Gastrocnemius medialis (tissue), 4 donors: ENCODE measurements at regions of chr12 and their contacts with region 1.

Region 1: GRCh38 chr12:116599285-116600136 is 40.3 kb downstream of the MAP1LC3B2 start:
- DNase-seq: peak; percentile 67 to 74
- ATAC-seq: peak; percentile 79 to 83
- H3K4me3 ChIP-seq: peak overlapping the region; percentile 46 to 66 (median 49)
- H3K27ac ChIP-seq: peak overlapping the region; percentile 68 to 82 (median 78)
- H3K4me1 ChIP-seq: peaks cover 15 to 20% of the 10 kb centered on the region in 2 donors
- H3K27me3 ChIP-seq: peaks cover 5 to 6% (median 6%) of the 10 kb centered on the region in 3 donors
- CTCF ChIP-seq: peak; percentile 27 to 84 (median 58)
- POLR2A ChIP-seq: peak; percentile 11 to 62

Region 2: DNA sequence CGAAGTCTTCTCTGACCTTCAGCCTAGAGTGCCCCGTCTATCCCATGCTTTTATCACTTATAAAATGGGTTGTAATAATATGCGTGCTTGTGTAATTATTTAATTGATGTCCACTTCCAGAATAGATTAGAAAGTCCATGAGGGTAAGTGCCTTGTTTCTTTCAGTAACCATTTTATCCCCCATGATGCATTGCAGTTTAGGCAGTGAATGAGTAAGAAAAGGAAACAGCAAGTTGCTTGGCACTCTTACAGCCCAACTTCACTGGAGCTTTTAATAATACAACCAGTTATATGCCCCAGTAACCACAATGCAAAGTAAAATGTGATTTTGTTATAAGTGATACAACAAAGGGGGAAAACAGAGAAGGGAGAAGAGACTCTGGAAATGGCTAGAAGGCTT is 609.3 kb before region 1 on chr12:
- in situ Hi-C with region 1: loop called in 3 of 4 experiments (anchors 5 to 25 kb)
- intact Hi-C with region 1: no loop called
- DNase-seq: no peak
- ATAC-seq: no peak
- H3K4me3 ChIP-seq: no peak overlapping the region
- H3K27ac ChIP-seq: no peak overlapping the region
- H3K4me1 ChIP-seq: peaks cover 3 to 14% of the 10 kb centered on the region in 2 donors
- H3K27me3 ChIP-seq: no peaks in the 10 kb centered on the region
- CTCF ChIP-seq: no peak
- POLR2A ChIP-seq: no peak

Region 3: GRCh38 chr12:116142936-116143898 is 456.3 kb before region 1 on chr12:
- in situ Hi-C with region 1: no loop called
- intact Hi-C with region 1: loop called (anchors 10 kb)
- DNase-seq: no peak
- ATAC-seq: no peak
- H3K4me3 ChIP-seq: no peak overlapping the region
- H3K27ac ChIP-seq: peak overlapping the region; percentile 32 to 67 (median 64)
- H3K4me1 ChIP-seq: peaks cover 63 to 70% of the 10 kb centered on the region in 2 donors
- H3K27me3 ChIP-seq: no peaks in the 10 kb centered on the region
- CTCF ChIP-seq: no peak
- POLR2A ChIP-seq: no peak

Region 4: GRCh38 chr12:116266168-116266601 is 333.3 kb before region 1 on chr12:
- in situ Hi-C with region 1: loop called in 3 of 4 experiments (anchors 10 to 25 kb)
- intact Hi-C with region 1: no loop called
- DNase-seq: no peak
- ATAC-seq: peak; percentile 76 to 94
- H3K4me3 ChIP-seq: no peak overlapping the region
- H3K27ac ChIP-seq: peak overlapping the region in 2 of 4 donors; percentile 25 to 32
- H3K4me1 ChIP-seq: peaks cover 73 to 75% of the 10 kb centered on the region in 2 donors
- H3K27me3 ChIP-seq: no peaks in the 10 kb centered on the region
- CTCF ChIP-seq: no peak
- POLR2A ChIP-seq: no peak

Region 5: DNA sequence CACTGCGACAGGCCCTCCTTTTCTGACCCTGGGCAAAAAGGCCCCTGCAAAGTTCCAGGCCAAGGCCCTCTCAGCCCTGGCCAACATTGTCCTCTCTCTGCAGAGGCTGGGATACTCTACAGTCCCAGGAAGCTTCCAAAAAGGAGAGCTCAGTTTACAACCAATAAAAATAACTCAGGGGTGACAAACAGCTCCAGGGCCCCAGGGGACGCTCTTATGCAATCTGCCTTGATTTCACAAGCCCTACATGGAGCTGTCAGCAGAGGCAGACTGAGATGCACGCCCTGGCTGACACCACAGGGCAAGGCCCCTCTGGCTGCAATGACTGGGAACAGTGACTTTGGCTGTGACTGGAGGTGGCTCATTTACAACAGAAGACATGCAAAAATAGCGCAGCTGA is 193.0 kb before region 1 on chr12:
- in situ Hi-C with region 1: no loop called
- intact Hi-C with region 1: loop called (anchors 5 kb)
- DNase-seq: peak; percentile 98 to 99
- ATAC-seq: peak; percentile 94 to 99
- H3K4me3 ChIP-seq: no peak overlapping the region
- H3K27ac ChIP-seq: peak overlapping the region; percentile 62 to 73 (median 68)
- H3K4me1 ChIP-seq: peaks cover 17 to 24% of the 10 kb centered on the region in 2 donors
- H3K27me3 ChIP-seq: no peaks in the 10 kb centered on the region
- CTCF ChIP-seq: peak in 2 of 5 experiments; percentile 37 to 39
- POLR2A ChIP-seq: peak in 1 of 2 donors; percentile 30

Region 6: DNA sequence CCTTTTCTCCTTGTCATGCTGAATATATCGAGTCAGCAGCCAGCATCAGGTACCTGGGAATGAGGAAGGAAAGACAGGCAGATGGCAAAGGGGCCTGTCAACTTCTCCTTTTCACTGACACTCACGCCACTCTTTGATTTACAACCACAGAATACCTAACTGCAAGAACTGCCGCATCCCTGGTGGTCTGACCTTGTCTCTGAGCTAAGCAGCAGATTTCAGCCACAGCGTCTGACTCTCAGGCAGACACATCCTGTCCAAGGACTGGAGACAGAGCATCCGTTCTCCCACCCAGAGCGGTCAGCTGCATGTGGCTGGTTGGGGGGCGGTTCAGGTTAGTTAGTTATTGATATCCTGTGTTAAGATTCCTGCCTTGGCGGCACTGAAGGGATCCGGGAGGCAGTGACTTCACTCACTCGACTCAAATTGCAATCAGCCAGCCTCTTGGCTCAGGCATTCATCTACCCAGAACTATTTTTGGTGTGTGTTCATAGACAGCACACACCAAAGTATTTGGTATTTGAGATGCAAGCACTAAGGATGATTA is 51.5 kb before region 1 on chr12:
- in situ Hi-C with region 1: loop called in 1 of 4 experiments (anchors 10 kb)
- intact Hi-C with region 1: no loop called
- DNase-seq: no peak
- ATAC-seq: peak; percentile 26 to 32
- H3K4me3 ChIP-seq: no peak overlapping the region
- H3K27ac ChIP-seq: no peak overlapping the region
- H3K4me1 ChIP-seq: peaks cover 10 to 11% of the 10 kb centered on the region in 2 donors
- H3K27me3 ChIP-seq: no peaks in the 10 kb centered on the region
- CTCF ChIP-seq: no peak
- POLR2A ChIP-seq: no peak

Region 7: DNA sequence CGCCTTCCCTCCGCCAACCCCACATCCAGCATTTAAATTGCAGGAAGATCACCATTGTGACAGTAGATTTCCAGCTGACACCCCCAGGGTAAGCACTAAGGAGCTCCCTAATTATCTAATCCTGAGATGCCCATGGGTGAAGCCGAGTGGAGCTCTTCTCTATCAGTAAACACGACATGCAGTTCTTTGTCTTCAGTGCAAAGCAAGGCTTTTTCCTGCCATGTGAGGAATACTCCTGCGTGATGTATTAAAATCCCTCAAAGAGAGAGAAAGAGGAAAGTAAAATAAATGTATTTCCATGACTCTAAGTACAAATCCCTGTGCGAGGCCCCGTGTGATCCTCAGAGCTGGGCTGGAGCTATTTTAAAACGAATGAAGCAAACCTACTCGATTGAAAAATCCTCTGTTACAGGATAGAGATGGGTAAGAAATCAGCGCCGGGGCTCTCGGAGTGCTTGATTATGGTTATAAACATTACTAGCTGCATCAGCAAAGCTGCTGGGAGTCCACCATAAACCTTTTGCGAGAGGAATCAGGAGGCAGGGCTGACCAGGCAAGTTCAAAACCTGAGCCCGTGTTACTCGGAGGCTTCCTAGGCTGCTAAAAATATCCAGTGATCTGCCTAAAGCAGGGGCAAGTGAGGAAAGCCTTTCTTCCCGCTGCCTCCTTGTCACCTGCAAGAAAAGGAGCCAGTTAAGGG is 21.1 kb after region 1 on chr12:
- in situ Hi-C with region 1: no loop called
- intact Hi-C with region 1: no loop called
- DNase-seq: no peak
- ATAC-seq: no peak
- H3K4me3 ChIP-seq: no peak overlapping the region
- H3K27ac ChIP-seq: no peak overlapping the region
- H3K4me1 ChIP-seq: peaks cover 0 to 10% of the 10 kb centered on the region in 2 donors
- H3K27me3 ChIP-seq: no peaks in the 10 kb centered on the region
- CTCF ChIP-seq: no peak
- POLR2A ChIP-seq: no peak

Region 8: GRCh38 chr12:116855744-116856470 is 256.4 kb after region 1 on chr12:
- in situ Hi-C with region 1: no loop called
- intact Hi-C with region 1: no loop called
- DNase-seq: no peak
- ATAC-seq: no peak
- H3K4me3 ChIP-seq: no peak overlapping the region
- H3K27ac ChIP-seq: no peak overlapping the region
- H3K4me1 ChIP-seq: no peaks in the 10 kb centered on the region
- H3K27me3 ChIP-seq: peaks cover 3 to 29% (median 19%) of the 10 kb centered on the region in 3 donors
- CTCF ChIP-seq: no peak
- POLR2A ChIP-seq: no peak